ENCODE measurements at regions of chr1 and their contacts with region 1.

Region 1: GRCh38 chr1:156129706-156130581 is 15.4 kb downstream of the LMNA start:
- DNase-seq: peak; percentile 93 to 97 (median 95)
- H3K4me3 ChIP-seq: peak overlapping the region; percentile 17
- H3K27ac ChIP-seq: peak overlapping the region; percentile 95 to 99
- H3K4me1 ChIP-seq: peaks cover 38% of the 10 kb centered on the region
- H3K27me3 ChIP-seq: no peaks in the 10 kb centered on the region
- CTCF ChIP-seq: peak; percentile 94 to 100 (median 99)
- EP300 ChIP-seq: no peak
- POLR2A ChIP-seq: peak; percentile 44

Region 2: DNA sequence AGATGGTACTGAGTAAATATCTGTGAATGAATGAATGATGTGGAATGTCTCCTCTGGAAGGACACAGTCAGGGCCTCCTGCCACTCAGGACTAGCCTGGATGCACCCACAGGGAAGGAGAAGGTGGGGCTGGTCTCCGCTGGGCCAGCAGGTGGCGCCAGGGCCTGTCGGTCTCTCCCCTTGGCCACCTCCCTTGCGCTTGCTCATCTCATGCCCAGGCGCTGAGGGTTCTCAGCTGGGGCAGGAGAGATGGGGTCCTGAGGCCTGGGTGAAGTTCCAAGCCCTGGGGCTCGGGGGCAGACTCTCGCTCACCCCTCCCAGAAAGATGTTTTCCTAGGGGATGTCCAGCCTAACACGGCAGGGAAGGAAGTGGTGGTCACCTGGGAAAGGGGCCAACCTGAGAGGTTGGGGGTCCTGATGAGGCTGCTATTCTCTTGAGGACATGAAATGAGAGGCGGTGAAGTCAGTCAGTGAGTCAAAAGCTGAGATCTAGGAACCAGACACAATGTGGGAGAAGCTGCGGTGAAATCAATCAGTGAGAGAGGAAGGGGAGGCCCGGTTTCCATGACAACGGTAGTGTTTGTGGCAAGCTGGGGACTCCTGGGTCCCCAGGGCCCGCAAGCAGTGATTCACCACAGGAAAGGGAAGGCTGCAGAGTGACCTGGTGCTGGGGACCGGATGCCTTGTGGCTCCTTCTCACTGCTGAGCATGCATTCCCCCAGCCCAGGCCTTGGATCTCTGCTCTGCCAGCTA is 33.1 kb before region 1 on chr1:
- intact Hi-C with region 1: loop called (anchors 1 to 2 kb)
- DNase-seq: peak; percentile 90 to 95 (median 94)
- H3K4me3 ChIP-seq: no peak overlapping the region
- H3K27ac ChIP-seq: peak overlapping the region; percentile 67 to 75
- H3K4me1 ChIP-seq: peaks cover 8% of the 10 kb centered on the region
- H3K27me3 ChIP-seq: no peaks in the 10 kb centered on the region
- CTCF ChIP-seq: peak; percentile 89 to 99 (median 98)
- EP300 ChIP-seq: no peak
- POLR2A ChIP-seq: peak; percentile 43

Measured in ovary (tissue), 10 donors.